Right ventricle myocardium superior (tissue), 1 donor: ENCODE measurements at regions of chr1 and their contacts with region 1.

Region 1: GRCh38 chr1:234987415-234988154 is 141.1 kb downstream of the TOMM20 start:
- DNase-seq: peak; percentile 75
- ATAC-seq: peak; percentile 88

Region 2: GRCh38 chr1:234963180-234963903 is 24.2 kb before region 1 on chr1:
- intact Hi-C with region 1: no loop called
- DNase-seq: peak; percentile 93
- ATAC-seq: peak; percentile 64

Region 3: DNA sequence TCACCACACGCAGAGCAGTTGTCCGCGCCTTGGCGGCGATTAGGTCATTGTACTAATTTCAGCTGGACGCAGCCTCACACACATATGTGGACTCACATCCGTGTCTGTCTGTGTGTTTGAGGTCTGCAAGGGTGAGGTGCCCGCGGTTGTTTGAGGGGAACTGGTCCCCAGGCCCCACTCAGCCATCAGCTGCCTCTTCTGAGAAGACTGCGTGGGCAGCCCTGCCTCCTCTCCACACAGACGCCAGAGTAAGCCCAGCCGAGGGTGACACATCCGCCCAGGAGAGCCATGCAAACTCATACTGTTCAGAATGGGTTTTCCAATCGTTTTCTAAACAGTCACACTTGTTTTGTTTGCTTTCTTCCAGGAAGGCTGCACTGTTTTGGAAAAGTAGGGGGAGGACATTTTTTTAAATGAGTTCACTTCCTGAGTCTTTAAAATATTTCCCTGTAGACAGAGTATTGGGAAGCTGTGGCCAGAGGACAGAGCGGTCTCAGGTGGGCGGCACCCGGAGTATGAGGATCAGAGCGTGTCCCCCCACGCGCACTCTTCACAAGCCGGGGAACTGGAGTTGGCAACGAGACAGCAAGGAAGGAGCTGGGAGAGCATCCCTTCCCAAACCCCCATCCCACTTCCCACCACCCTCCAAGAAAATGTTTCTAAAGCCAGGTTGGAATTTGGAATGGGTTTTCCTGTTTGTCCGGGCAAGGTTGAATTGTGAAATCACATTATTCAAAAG is 87.8 kb after region 1 on chr1:
- intact Hi-C with region 1: loop called (anchors 5 kb)
- DNase-seq: peak; percentile 80
- ATAC-seq: peak; percentile 54